ENCODE measurements at regions of chr1 and their contacts with region 1.

Region 1: DNA sequence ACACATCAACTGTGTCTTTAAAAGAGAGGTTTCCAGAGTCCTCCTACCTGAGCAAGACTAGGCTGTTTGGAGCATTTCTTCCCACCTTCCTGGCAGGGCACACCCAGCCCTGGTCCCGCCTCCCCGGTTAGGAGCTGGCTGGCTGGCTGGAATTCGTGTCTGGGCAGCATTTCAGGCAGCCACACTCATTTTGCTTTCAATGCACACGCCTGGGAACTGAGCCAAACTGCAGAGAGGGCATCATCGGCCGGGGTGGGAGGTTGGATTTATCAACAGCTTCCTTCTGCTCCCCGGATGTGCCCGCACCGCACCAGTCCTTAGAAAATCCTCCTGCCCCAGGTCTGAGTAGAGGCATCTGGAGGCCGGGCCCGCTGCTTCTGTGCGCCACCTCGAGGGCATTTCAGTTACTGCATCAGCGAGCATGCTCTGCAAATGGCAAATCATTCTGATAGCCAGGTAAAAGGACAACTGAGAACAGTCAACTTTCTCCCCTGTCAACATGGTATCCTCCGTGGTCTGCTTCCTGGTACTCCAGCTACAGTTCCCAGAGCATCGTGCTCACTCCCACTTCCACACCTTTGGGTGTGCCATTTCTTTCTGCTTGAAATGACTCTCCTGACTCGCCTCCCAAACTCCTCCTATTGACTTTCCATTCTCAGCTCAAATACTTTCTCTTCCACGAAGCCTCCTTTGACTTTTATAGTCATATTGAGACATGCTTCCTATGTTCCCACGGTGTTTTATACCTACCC is 20.6 kb downstream of the TCEA3 start:
- DNase-seq: peak; percentile 90
- H3K4me3 Mint-ChIP-seq: peak overlapping the region; percentile 7
- H3K27ac Mint-ChIP-seq: no peak overlapping the region
- H3K4me1 Mint-ChIP-seq: peaks cover 26% of the 10 kb centered on the region
- H3K27me3 Mint-ChIP-seq: no peaks in the 10 kb centered on the region
- CTCF ChIP-seq: peak; percentile 81

Region 2: GRCh38 chr1:23129846-23130245 is 274.1 kb before region 1 on chr1:
- CTCF ChIA-PET with region 1: no interaction called
- intact Hi-C with region 1: no loop called
- DNase-seq: no peak
- H3K4me3 Mint-ChIP-seq: no peak overlapping the region
- H3K27ac Mint-ChIP-seq: no peak overlapping the region
- H3K4me1 Mint-ChIP-seq: no peaks in the 10 kb centered on the region
- H3K27me3 Mint-ChIP-seq: no peaks in the 10 kb centered on the region
- CTCF ChIP-seq: no peak

Region 3: GRCh38 chr1:23210351-23210785 is 193.5 kb before region 1 on chr1:
- CTCF ChIA-PET with region 1: no interaction called
- intact Hi-C with region 1: no loop called
- DNase-seq: peak; percentile 23
- H3K4me3 Mint-ChIP-seq: no peak overlapping the region
- H3K27ac Mint-ChIP-seq: no peak overlapping the region
- H3K4me1 Mint-ChIP-seq: peaks cover 8% of the 10 kb centered on the region
- H3K27me3 Mint-ChIP-seq: no peaks in the 10 kb centered on the region
- CTCF ChIP-seq: no peak

Region 4: DNA sequence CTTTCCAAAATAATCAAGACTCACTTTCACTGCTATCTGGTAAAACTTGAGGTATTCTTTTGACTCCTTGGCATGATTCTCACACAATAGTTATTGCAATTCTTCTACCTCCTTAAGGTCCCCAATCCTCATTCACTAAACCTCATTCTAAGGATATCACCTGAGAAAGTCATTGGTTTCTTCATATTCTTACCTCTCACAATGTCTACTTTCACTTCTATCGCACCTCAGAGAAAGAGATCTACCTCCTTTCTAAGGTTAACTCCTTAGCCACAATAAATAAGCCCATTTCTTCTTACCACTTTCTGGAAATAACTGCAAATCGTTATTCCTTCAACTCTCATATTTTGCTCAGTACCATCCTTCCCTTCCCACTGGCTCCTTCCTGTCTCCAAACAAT is 78.5 kb before region 1 on chr1:
- CTCF ChIA-PET with region 1: interaction called, 6 read pairs
- intact Hi-C with region 1: loop called (anchors 5 kb)
- DNase-seq: no peak
- H3K4me3 Mint-ChIP-seq: no peak overlapping the region
- H3K27ac Mint-ChIP-seq: peak overlapping the region; percentile 13
- H3K4me1 Mint-ChIP-seq: peaks cover 2% of the 10 kb centered on the region
- H3K27me3 Mint-ChIP-seq: no peaks in the 10 kb centered on the region
- CTCF ChIP-seq: no peak

Region 5: GRCh38 chr1:23367791-23368561 is 35.9 kb before region 1 on chr1:
- CTCF ChIA-PET with region 1: interaction called, 27 read pairs
- intact Hi-C with region 1: loop called (anchors 2 kb)
- DNase-seq: peak; percentile 94
- H3K4me3 Mint-ChIP-seq: peak overlapping the region; percentile 91
- H3K27ac Mint-ChIP-seq: peak overlapping the region; percentile 63
- H3K4me1 Mint-ChIP-seq: peaks cover 33% of the 10 kb centered on the region
- H3K27me3 Mint-ChIP-seq: no peaks in the 10 kb centered on the region
- CTCF ChIP-seq: no peak

Region 6: GRCh38 chr1:23459338-23459757 is 55.4 kb after region 1 on chr1:
- CTCF ChIA-PET with region 1: no interaction called
- intact Hi-C with region 1: no loop called
- DNase-seq: no peak
- H3K4me3 Mint-ChIP-seq: no peak overlapping the region
- H3K27ac Mint-ChIP-seq: no peak overlapping the region
- H3K4me1 Mint-ChIP-seq: no peaks in the 10 kb centered on the region
- H3K27me3 Mint-ChIP-seq: peaks cover 46% of the 10 kb centered on the region
- CTCF ChIP-seq: no peak